T-cell (primary cell): ENCODE measurements at regions of chr5 and their contacts with region 1.

Region 1: GRCh38 chr5:137743031-137743640 is 7.2 kb upstream of the KLHL3 start:
- DNase-seq: peak in 33 of 35 experiments; percentile 21 to 86 (median 56)
- ATAC-seq: peak; percentile 83 to 88 (median 86)
- H3K4me3 ChIP-seq: no peak overlapping the region
- H3K4me3 Mint-ChIP-seq: no peak overlapping the region
- H3K27ac ChIP-seq: no peak overlapping the region
- H3K27ac Mint-ChIP-seq: no peak overlapping the region
- H3K4me1 ChIP-seq: peaks cover 0 to 4% of the 10 kb centered on the region in 2 experiments
- H3K4me1 Mint-ChIP-seq: peaks cover 4 to 20% (median 5%) of the 10 kb centered on the region in 3 donors
- H3K27me3 ChIP-seq: no peaks in the 10 kb centered on the region
- H3K27me3 Mint-ChIP-seq: no peaks in the 10 kb centered on the region

Region 2: DNA sequence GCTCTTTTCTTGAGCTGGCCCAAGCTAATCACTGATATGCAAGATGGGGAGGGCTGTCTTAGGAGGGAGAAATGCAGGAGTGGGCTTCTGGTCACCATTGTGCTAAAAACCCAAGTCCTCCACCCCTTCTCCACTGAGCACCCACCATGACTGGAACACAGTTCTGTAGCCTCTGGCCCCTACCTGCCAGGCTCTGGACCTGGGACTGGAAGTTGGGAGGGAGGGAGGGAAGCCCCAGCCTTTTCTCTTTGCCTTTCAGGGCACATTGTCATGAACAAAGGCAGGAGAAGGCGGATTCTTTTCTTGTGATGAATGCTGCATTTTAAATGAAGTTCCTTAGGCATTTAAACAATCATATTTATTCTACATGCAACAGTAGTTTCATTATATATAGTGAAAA is 818.6 kb before region 1 on chr5:
- CTCF ChIA-PET with region 1: no interaction called
- POLR2A ChIA-PET with region 1: no interaction called
- DNase-seq: no peak
- ATAC-seq: no peak
- H3K4me3 ChIP-seq: no peak overlapping the region
- H3K4me3 Mint-ChIP-seq: no peak overlapping the region
- H3K27ac ChIP-seq: no peak overlapping the region
- H3K27ac Mint-ChIP-seq: no peak overlapping the region
- H3K4me1 ChIP-seq: no peaks in the 10 kb centered on the region
- H3K4me1 Mint-ChIP-seq: no peaks in the 10 kb centered on the region
- H3K27me3 ChIP-seq: no peaks in the 10 kb centered on the region
- H3K27me3 Mint-ChIP-seq: no peaks in the 10 kb centered on the region

Region 3: GRCh38 chr5:137629646-137630045 is 113.5 kb before region 1 on chr5:
- CTCF ChIA-PET with region 1: interaction called, 14 to 37 read pairs
- POLR2A ChIA-PET with region 1: no interaction called
- DNase-seq: peak in 14 of 35 experiments; percentile 2 to 74 (median 19)
- ATAC-seq: peak; percentile 67 to 78 (median 78)
- H3K4me3 ChIP-seq: no peak overlapping the region
- H3K4me3 Mint-ChIP-seq: no peak overlapping the region
- H3K27ac ChIP-seq: no peak overlapping the region
- H3K27ac Mint-ChIP-seq: no peak overlapping the region
- H3K4me1 ChIP-seq: no peaks in the 10 kb centered on the region
- H3K4me1 Mint-ChIP-seq: peaks cover 0 to 5% (median 0%) of the 10 kb centered on the region in 3 donors
- H3K27me3 ChIP-seq: no peaks in the 10 kb centered on the region
- H3K27me3 Mint-ChIP-seq: no peaks in the 10 kb centered on the region

Region 4: GRCh38 chr5:137660349-137660817 is 82.8 kb before region 1 on chr5:
- CTCF ChIA-PET with region 1: interaction called, 109 to 229 read pairs
- POLR2A ChIA-PET with region 1: interaction called, 8 to 16 read pairs
- DNase-seq: peak; percentile 36 to 84 (median 65)
- ATAC-seq: peak; percentile 86 to 98 (median 92)
- H3K4me3 ChIP-seq: no peak overlapping the region
- H3K4me3 Mint-ChIP-seq: no peak overlapping the region
- H3K27ac ChIP-seq: no peak overlapping the region
- H3K27ac Mint-ChIP-seq: no peak overlapping the region
- H3K4me1 ChIP-seq: no peaks in the 10 kb centered on the region
- H3K4me1 Mint-ChIP-seq: peaks cover 10 to 18% (median 13%) of the 10 kb centered on the region in 3 donors
- H3K27me3 ChIP-seq: no peaks in the 10 kb centered on the region
- H3K27me3 Mint-ChIP-seq: no peaks in the 10 kb centered on the region

Region 5: GRCh38 chr5:137665678-137666460 is 77.3 kb before region 1 on chr5:
- CTCF ChIA-PET with region 1: interaction called, 109 to 229 read pairs
- POLR2A ChIA-PET with region 1: interaction called, 5 to 8 read pairs
- DNase-seq: peak; percentile 5 to 65 (median 24)
- ATAC-seq: peak; percentile 100
- H3K4me3 ChIP-seq: no peak overlapping the region
- H3K4me3 Mint-ChIP-seq: no peak overlapping the region
- H3K27ac ChIP-seq: no peak overlapping the region
- H3K27ac Mint-ChIP-seq: peak overlapping the region; percentile 65 to 85
- H3K4me1 ChIP-seq: peaks cover 4 to 6% of the 10 kb centered on the region in 2 experiments
- H3K4me1 Mint-ChIP-seq: peaks cover 15 to 30% (median 26%) of the 10 kb centered on the region in 3 donors
- H3K27me3 ChIP-seq: no peaks in the 10 kb centered on the region
- H3K27me3 Mint-ChIP-seq: no peaks in the 10 kb centered on the region

Region 6: DNA sequence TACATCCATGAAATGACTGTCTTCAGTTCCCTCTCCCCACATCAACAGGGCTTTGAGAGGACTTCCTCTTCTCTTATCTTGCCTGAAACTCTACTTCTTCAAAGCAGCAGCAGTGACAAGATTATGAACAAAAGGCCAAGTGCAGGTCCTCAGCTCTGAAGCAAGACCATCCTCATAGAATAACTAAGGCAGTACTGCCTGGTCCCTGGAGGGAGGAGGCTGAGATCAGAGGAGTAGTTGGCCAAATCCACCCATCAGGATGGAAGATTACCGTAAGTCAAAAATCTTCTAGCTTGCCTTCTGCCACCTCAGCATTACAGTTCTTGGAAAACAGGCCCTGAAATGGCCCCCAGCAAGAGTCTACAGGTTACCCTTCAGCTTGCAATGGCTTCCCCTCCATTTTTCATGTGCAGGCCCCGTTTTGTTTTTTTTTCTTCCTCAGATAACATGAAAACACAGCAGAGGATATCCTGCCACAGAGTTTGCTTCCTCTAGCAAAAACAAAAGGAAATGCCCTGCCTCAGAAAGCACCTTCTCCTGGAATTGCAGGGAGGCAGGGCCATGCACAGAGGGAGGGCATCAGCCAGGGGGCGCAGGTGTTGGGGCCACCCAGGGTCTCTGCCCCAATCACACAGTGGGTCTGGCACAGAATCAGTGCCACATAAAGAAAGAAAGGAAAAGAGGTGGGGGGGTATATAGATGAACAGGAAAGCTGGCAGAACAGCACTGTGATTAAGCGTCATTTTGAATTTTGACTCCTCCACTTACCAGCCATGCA is 47.3 kb before region 1 on chr5:
- CTCF ChIA-PET with region 1: interaction called, 6 to 12 read pairs
- POLR2A ChIA-PET with region 1: no interaction called
- DNase-seq: peak; percentile 3 to 69 (median 35)
- ATAC-seq: peak; percentile 88 to 93 (median 90)
- H3K4me3 ChIP-seq: peak overlapping the region in 1 of 2 donors; percentile 39
- H3K4me3 Mint-ChIP-seq: peak overlapping the region; percentile 57 to 70 (median 66)
- H3K27ac ChIP-seq: peak overlapping the region; percentile 64
- H3K27ac Mint-ChIP-seq: peak overlapping the region; percentile 97 to 98
- H3K4me1 ChIP-seq: peaks cover 33 to 50% of the 10 kb centered on the region in 2 experiments
- H3K4me1 Mint-ChIP-seq: peaks cover 60 to 73% (median 64%) of the 10 kb centered on the region in 3 donors
- H3K27me3 ChIP-seq: no peaks in the 10 kb centered on the region
- H3K27me3 Mint-ChIP-seq: no peaks in the 10 kb centered on the region

Region 7: GRCh38 chr5:137730336-137730735 is 12.8 kb before region 1 on chr5:
- CTCF ChIA-PET with region 1: interaction called, 6 to 23 read pairs
- POLR2A ChIA-PET with region 1: interaction called in 1 of 2 experiments, 4 read pairs
- DNase-seq: no peak
- ATAC-seq: no peak
- H3K4me3 ChIP-seq: no peak overlapping the region
- H3K4me3 Mint-ChIP-seq: no peak overlapping the region
- H3K27ac ChIP-seq: no peak overlapping the region
- H3K27ac Mint-ChIP-seq: no peak overlapping the region
- H3K4me1 ChIP-seq: peaks cover 17 to 26% of the 10 kb centered on the region in 2 experiments
- H3K4me1 Mint-ChIP-seq: peaks cover 9 to 21% (median 11%) of the 10 kb centered on the region in 3 donors
- H3K27me3 ChIP-seq: no peaks in the 10 kb centered on the region
- H3K27me3 Mint-ChIP-seq: no peaks in the 10 kb centered on the region